T-cell (primary cell): ENCODE measurements at regions of chr5 and their contacts with region 1.

Region 1: GRCh38 chr5:81020478-81021174 is 60.5 kb downstream of the RASGRF2 start:
- DNase-seq: no peak
- ATAC-seq: no peak
- H3K4me3 ChIP-seq: no peak overlapping the region
- H3K4me3 Mint-ChIP-seq: peak overlapping the region in 1 of 3 donors; percentile 36
- H3K27ac ChIP-seq: no peak overlapping the region
- H3K27ac Mint-ChIP-seq: peak overlapping the region; percentile 9 to 29
- H3K4me1 ChIP-seq: peaks cover 8 to 42% of the 10 kb centered on the region in 2 experiments
- H3K4me1 Mint-ChIP-seq: peaks cover 90 to 94% (median 92%) of the 10 kb centered on the region in 3 donors
- H3K27me3 ChIP-seq: no peaks in the 10 kb centered on the region
- H3K27me3 Mint-ChIP-seq: no peaks in the 10 kb centered on the region

Region 2: GRCh38 chr5:81045389-81045807 is 24.8 kb after region 1 on chr5:
- CTCF ChIA-PET with region 1: interaction called in 1 of 2 experiments, 13 read pairs
- POLR2A ChIA-PET with region 1: interaction called in 1 of 2 experiments, 3 read pairs
- DNase-seq: no peak
- ATAC-seq: no peak
- H3K4me3 ChIP-seq: no peak overlapping the region
- H3K4me3 Mint-ChIP-seq: no peak overlapping the region
- H3K27ac ChIP-seq: no peak overlapping the region
- H3K27ac Mint-ChIP-seq: peak overlapping the region in 1 of 2 donors; percentile 3
- H3K4me1 ChIP-seq: no peaks in the 10 kb centered on the region
- H3K4me1 Mint-ChIP-seq: peaks cover 63 to 68% (median 64%) of the 10 kb centered on the region in 3 donors
- H3K27me3 ChIP-seq: no peaks in the 10 kb centered on the region
- H3K27me3 Mint-ChIP-seq: no peaks in the 10 kb centered on the region